ENCODE measurements at regions of chr2 and their contacts with region 1.

Region 1: DNA sequence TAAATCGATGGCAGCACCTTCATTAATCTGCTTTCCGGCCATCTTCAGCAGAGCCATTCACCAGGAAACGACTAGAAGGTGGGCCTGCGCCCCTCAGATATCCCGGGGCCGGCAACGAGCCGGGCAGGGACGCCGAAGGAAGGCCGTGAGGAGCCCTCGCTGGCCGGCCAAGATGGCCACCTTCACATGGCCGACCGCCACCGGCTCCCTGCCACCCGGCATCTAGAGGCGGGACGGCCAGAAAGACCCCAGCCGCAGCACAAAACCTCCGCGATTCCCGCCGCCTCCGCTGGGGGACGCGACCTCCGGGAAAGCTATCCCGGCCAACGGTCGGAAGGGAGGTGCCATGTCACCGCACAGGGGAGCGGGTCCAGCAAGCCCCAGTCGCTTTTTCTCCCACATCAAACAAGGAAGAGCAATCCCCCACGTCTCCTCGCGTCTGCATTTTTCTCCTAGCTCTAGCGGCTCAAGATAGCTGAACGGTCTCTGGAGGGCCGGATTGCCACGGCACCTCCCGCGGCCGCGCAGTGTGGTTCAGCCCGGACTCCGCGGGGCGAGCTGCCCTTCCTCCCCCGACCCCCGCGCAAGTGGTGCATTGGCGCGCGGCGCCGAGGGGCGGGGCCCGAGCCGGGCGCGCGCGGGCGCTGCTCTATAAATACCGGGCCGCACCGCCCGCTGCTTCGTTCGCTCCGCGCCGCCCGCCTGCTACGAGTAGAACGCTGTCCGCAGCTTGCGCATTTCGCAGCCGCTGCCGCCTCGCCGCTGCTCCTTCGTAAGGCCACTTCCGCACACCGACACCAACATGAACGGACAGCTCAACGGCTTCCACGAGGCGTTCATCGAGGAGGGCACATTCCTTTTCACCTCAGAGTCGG is at the start of gene MAT2A:
- DNase-seq: peak; percentile 81 to 91
- H3K4me3 ChIP-seq: peak within 1 kb of the TSS; percentile 100
- H3K27ac ChIP-seq: peak within 1 kb of the TSS; percentile 97
- H3K4me1 ChIP-seq: peaks cover 38% of the 10 kb centered on the region
- H3K27me3 ChIP-seq: no peaks in the 10 kb centered on the region
- CTCF ChIP-seq: peak; percentile 69
- total RNA-seq, gene MAT2A: 169 and 206 TPM in 2 replicates

Region 2: DNA sequence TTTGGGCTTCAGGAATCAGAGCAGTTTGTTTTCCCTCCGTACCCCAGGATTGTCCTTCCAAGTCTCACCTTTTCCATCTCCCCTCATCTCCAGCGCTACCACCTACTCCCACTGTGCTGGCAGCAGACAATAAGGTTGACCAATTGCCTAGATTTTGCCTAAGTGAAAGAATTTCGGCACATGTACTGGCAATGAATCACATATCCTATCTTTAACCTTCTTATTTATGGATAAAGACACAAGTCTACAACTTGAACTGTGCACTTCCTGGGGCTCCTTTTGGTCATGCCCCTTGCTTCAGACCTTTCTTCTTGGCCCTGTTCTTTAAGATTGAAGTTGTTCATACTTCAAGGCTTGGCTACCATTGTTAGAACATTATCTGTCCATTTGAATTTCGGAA is 496.4 kb before region 1 on chr2:
- CTCF ChIA-PET with region 1: no interaction called
- POLR2A ChIA-PET with region 1: interaction called, 19 read pairs
- intact Hi-C with region 1: no loop called
- DNase-seq: no peak
- H3K4me3 ChIP-seq: no peak overlapping the region
- H3K27ac ChIP-seq: no peak overlapping the region
- H3K4me1 ChIP-seq: no peaks in the 10 kb centered on the region
- H3K27me3 ChIP-seq: no peaks in the 10 kb centered on the region
- CTCF ChIP-seq: no peak

Region 3: GRCh38 chr2:85369500-85369899 is 169.2 kb before region 1 on chr2:
- CTCF ChIA-PET with region 1: no interaction called
- POLR2A ChIA-PET with region 1: interaction called, 15 read pairs
- intact Hi-C with region 1: no loop called
- DNase-seq: no peak
- H3K4me3 ChIP-seq: no peak overlapping the region
- H3K27ac ChIP-seq: no peak overlapping the region
- H3K4me1 ChIP-seq: no peaks in the 10 kb centered on the region
- H3K27me3 ChIP-seq: no peaks in the 10 kb centered on the region
- CTCF ChIP-seq: no peak

Region 4: DNA sequence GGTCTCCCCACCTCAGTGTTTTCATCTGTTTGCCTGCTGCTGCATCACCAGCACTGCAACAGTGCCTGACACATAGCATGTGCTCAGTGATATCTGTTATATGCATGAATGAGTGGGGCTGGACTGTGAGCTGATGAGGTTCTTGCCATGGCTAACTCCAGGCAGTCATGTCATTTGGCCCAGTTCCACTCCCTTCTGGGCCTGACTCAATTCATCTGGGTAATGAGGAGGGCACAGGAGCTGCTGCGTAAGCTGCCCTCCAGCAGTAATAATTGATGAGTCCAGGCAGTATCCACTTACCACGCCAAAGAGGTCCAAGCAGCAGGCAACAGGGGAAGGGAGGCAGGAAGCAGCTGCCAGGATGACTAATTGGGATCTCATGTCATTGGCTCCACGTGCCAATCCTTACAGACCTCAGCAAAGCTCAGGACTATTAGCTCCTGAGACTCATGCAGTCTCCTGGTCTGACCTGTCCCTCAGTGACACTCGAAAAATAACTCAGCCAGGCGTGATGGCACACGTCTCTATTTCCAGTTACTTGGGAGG is 33.9 kb before region 1 on chr2:
- CTCF ChIA-PET with region 1: interaction called, 10 read pairs
- POLR2A ChIA-PET with region 1: interaction called, 9 read pairs
- intact Hi-C with region 1: loop called (anchors 2 kb)
- DNase-seq: peak; percentile 67 to 98
- H3K4me3 ChIP-seq: no peak overlapping the region
- H3K27ac ChIP-seq: peak overlapping the region; percentile 63
- H3K4me1 ChIP-seq: peaks cover 47% of the 10 kb centered on the region
- H3K27me3 ChIP-seq: no peaks in the 10 kb centered on the region
- CTCF ChIP-seq: no peak

Region 5: GRCh38 chr2:85577386-85578242 is 38.9 kb after region 1 on chr2 and contains the start of gene VAMP8:
- CTCF ChIA-PET with region 1: no interaction called
- POLR2A ChIA-PET with region 1: interaction called, 23 read pairs
- intact Hi-C with region 1: no loop called
- DNase-seq: peak; percentile 79 to 83
- H3K4me3 ChIP-seq: peak within 1 kb of the TSS; percentile 60
- H3K27ac ChIP-seq: peak within 1 kb of the TSS; percentile 64
- H3K4me1 ChIP-seq: peaks cover 22% of the 10 kb centered on the region
- H3K27me3 ChIP-seq: no peaks in the 10 kb centered on the region
- CTCF ChIP-seq: no peak
- total RNA-seq, gene VAMP8: 91.9 and 124 TPM in 2 replicates

Measured in PC-9 (cell line).